CD8-positive, alpha-beta memory T cell (primary cell): ENCODE measurements at regions of chr7 and their contacts with region 1.

Region 1: DNA sequence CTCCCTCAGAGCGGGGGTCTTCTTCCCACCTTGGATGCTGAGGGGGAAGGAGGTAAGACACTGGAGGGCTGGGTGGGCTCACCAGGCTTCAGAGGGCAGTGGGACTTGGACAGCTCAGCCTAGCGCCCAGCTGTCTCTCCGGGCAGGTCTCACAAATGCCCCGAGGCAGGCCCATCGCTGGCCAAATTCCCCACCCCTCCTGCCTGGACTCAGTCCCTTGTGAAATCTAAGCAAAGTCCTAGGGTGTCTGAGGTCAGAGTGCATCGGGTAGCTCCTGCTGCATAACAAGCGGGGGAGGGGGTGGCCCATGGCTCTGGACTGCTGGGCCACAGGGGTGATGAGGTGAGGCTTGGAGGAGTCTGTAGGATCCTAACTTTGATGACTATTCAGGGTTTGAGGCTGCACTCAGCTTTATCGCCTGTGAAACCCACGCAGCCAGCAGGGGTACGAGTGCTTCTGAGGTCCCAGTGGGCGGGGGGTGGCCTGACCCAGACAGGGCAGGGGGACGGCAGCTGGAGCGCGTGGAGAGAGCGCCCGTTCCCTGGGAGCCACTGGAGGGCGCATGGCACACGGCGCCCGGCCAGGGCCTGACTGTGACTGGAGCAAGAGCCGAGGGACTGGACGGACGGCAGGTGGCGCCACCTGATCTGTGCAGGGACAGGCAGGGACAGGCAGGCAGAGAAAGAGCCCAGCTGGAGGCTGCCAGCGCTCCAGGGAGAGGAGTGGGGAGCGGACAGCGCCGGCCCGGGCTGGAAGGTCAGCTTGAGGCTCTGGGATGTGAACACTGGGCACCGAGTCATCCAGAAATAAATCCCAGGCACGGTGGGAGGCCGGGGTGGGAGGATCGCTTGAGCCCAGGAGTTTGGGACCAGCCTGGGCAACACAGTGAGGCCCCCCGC is 10.0 kb downstream of the CYP2W1 start:
- DNase-seq: peak; percentile 83 to 95 (median 89)
- H3K4me3 ChIP-seq: no peak overlapping the region
- H3K4me3 Mint-ChIP-seq: no peak overlapping the region
- H3K27ac ChIP-seq: no peak overlapping the region
- H3K27ac Mint-ChIP-seq: peak overlapping the region in 1 of 8 donors; percentile 66
- H3K4me1 ChIP-seq: peaks cover 5% of the 10 kb centered on the region
- H3K4me1 Mint-ChIP-seq: peaks cover 0 to 5% (median 3%) of the 10 kb centered on the region in 3 donors
- H3K27me3 ChIP-seq: no peaks in the 10 kb centered on the region
- H3K27me3 Mint-ChIP-seq: no peaks in the 10 kb centered on the region

Region 2: DNA sequence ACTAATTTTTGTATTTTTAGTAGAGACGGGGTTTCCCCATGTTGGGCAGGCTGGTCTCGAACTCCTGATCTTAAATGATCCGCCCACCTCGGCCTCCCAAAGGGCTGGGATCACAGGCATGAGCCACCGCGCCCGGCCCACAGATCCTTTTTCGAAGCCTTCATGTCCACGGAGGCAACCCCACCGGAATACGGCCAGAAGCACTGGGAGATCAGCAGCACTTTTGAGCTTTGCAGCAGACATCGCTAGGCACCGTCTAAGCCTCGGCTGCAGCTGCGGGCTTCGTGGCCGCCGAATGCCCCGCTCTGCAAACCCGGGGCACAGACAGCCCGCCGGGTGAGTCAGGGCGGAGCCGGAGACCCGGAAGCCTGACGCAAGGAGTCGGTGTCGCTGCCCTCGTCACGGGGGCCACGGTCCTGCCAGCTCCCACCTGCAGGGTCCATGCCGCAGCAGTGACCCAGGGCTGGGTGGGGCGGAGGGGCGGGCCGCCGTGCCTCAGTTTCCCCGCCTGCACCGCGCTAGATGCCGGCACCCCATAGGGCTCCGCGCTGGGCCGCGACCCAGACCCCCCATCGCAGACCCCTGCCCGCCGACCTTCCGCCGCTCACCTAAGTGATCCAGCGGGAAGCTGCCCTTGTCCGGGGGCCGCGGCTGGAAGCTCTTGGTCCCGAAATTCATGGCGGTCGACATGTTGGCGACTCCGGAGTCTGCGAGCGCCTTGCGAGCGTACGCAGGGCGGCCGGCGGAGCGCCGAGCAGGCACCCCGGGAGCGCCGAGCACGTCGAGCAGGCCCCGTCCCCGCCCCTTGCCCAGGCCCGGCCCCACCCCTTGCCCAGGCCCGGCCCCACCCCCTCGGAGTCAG is 17.9 kb before region 1 on chr7 and contains the start of gene COX19:
- CTCF ChIA-PET with region 1: interaction called, 43 read pairs
- POLR2A ChIA-PET with region 1: no interaction called
- DNase-seq: peak; percentile 84 to 91 (median 86)
- H3K4me3 ChIP-seq: peak within 1 kb of the TSS; percentile 79
- H3K4me3 Mint-ChIP-seq: peak within 1 kb of the TSS; percentile 90 to 97 (median 93)
- H3K27ac ChIP-seq: peak within 1 kb of the TSS; percentile 87
- H3K27ac Mint-ChIP-seq: peak within 1 kb of the TSS; percentile 90 to 98 (median 96)
- H3K4me1 ChIP-seq: peaks cover 29% of the 10 kb centered on the region
- H3K4me1 Mint-ChIP-seq: peaks cover 28 to 36% (median 35%) of the 10 kb centered on the region in 3 donors
- H3K27me3 ChIP-seq: no peaks in the 10 kb centered on the region
- H3K27me3 Mint-ChIP-seq: peaks cover 0 to 2% of the 10 kb centered on the region in 2 donors
- total RNA-seq, gene COX19: 18.9 to 21.3 TPM

Region 3: DNA sequence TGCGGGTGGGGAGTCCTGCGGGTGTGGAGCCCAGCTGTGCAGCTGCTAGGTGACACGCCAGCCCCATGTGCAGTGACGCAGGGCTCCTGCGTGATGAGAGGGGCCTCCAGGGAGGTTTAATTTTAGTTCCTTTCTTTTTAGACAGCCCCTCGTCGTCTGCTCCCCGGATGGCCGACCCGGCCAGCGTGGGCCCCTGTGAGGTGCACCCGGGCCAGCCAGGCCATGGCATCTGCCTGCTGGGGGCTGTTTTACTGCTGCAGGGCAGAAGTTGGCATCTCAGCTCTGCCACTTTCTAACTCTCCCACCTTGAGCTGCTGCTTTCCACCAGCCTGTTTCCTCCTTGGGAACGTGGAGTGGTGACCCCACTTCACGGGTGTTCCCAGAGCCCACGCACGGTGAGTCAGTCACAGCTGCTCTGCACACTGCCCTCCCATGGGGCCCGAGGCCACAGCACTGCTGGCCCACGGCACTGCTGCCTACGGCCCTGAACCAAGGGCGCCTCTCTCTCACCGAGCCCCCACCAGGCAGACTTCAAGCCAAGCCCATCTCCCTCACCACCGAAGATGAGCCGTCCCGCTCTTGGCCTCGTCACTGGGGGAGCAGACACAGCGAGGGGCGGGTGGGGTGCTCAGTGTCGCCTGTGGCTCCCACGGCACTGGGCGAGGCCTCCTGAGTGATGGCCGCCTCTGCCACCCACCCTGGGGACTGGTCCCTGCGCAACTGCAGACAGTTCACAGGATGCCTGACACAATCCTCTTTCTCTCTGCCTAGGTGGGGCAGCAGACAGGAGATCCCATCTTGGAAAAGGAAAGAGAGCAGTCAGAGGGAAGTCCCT is 11.3 kb after region 1 on chr7:
- CTCF ChIA-PET with region 1: interaction called, 12 read pairs
- POLR2A ChIA-PET with region 1: no interaction called
- DNase-seq: no peak
- H3K4me3 ChIP-seq: no peak overlapping the region
- H3K4me3 Mint-ChIP-seq: no peak overlapping the region
- H3K27ac ChIP-seq: no peak overlapping the region
- H3K27ac Mint-ChIP-seq: no peak overlapping the region
- H3K4me1 ChIP-seq: no peaks in the 10 kb centered on the region
- H3K4me1 Mint-ChIP-seq: peaks cover 0 to 4% (median 2%) of the 10 kb centered on the region in 3 donors
- H3K27me3 ChIP-seq: no peaks in the 10 kb centered on the region
- H3K27me3 Mint-ChIP-seq: no peaks in the 10 kb centered on the region

Region 4: DNA sequence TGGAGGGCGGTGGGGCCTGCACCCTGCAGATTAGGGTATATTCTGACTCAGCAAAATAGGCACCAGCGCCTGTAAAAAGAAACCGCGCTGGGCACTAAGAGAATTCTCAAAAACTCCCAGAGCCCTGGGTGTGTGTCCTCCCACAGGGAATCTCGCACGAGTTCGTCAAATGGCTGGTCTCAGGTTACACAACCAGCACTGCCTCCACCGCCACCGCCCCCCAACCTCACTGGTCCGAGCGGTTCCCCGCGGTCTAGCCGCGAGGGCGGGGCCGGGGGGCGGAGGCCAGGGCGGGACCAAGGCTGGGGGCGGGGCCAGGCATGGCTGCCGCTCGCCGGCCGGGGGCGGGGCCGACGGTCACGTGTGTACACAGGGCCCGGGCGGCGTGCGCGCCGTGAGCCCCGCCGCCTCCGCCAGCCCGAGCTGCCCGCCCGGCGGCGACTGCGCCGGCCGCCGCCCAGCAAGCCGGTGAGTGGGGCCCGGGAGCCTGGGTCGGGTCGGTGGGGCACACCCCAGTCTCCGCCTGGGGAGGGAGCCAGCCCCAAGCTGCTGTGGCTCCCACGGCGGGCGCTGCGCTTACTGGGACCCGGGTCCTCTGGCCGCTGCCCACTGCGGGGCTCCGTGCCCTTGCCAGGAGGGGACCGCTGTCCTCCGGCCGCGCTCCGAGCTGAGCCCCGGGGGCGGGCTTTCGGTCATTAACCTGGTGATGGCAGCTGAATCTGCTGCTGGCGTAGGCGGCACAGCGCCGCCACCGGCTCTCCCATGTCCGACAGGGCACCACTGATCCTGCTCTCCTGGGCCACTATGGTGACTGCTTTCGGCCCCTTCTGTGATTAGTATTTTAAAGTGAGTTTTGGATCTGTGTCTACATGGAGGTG is 51.5 kb after region 1 on chr7 and contains the start of gene GPR146:
- CTCF ChIA-PET with region 1: interaction called, 28 read pairs
- POLR2A ChIA-PET with region 1: no interaction called
- DNase-seq: peak; percentile 81 to 92 (median 89)
- H3K4me3 ChIP-seq: peak within 1 kb of the TSS; percentile 68
- H3K4me3 Mint-ChIP-seq: peak within 1 kb of the TSS; percentile 83 to 92 (median 87)
- H3K27ac ChIP-seq: peak within 1 kb of the TSS; percentile 76
- H3K27ac Mint-ChIP-seq: peak within 1 kb of the TSS; percentile 67 to 90 (median 86)
- H3K4me1 ChIP-seq: peaks cover 65% of the 10 kb centered on the region
- H3K4me1 Mint-ChIP-seq: peaks cover 57 to 72% (median 59%) of the 10 kb centered on the region in 3 donors
- H3K27me3 ChIP-seq: no peaks in the 10 kb centered on the region
- H3K27me3 Mint-ChIP-seq: no peaks in the 10 kb centered on the region
- total RNA-seq, gene GPR146: 0.55 to 0.70 TPM

Region 5: DNA sequence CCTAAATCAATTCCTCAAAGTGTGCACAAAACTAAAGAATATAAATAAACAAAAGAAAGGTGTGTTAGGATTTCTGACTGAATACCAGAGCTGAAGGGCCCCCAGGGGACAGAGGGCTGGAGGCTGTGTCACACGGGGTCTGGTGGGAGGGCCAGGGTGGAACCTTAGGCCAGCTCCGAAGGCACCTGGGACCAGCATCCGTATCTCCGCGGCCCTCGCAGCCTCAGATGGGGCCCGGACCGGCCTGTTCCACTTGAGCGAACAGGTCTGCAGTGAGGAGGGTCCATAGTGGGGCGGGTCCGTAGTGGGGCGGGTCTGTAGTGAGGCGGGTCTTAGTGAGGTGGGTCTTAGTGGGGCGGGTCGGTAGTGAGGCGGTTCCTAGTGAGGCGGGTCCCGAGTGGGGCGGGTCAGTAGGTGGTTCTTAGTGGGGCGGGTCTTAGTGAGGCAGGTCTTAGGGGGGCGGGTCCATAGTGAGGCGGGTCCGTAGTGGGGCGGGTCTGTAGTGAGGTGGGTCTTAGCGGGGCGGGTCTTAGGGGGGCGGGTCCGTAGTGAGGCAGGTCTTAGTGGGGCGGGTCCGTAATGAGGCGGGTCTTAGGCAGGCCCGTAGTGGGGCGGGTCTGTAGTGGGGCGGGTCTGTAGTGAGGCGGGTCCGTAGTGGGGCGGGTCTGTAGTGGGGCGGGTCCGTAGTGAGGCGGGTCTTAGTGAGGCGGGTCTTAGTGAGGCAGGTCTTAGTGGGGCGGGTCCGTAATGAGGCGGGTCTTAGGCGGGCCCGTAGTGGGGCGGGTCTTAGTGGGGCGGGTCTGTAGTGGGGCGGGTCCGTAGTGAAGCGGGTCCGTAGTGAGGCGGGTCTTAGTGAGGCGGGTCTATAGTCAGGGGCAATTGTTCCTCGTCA is 66.5 kb after region 1 on chr7:
- CTCF ChIA-PET with region 1: interaction called, 222 read pairs
- POLR2A ChIA-PET with region 1: no interaction called
- DNase-seq: no peak
- H3K4me3 ChIP-seq: no peak overlapping the region
- H3K4me3 Mint-ChIP-seq: peak overlapping the region in 1 of 7 donors; percentile 66
- H3K27ac ChIP-seq: no peak overlapping the region
- H3K27ac Mint-ChIP-seq: peak overlapping the region in 2 of 8 donors; percentile 54 to 73
- H3K4me1 ChIP-seq: peaks cover 9% of the 10 kb centered on the region
- H3K4me1 Mint-ChIP-seq: peaks cover 0 to 4% (median 4%) of the 10 kb centered on the region in 3 donors
- H3K27me3 ChIP-seq: no peaks in the 10 kb centered on the region
- H3K27me3 Mint-ChIP-seq: no peaks in the 10 kb centered on the region

Region 6: GRCh38 chr7:1073142-1073977 is 80.4 kb after region 1 on chr7:
- CTCF ChIA-PET with region 1: interaction called, 19 read pairs
- POLR2A ChIA-PET with region 1: interaction called, 5 read pairs
- DNase-seq: no peak
- H3K4me3 ChIP-seq: no peak overlapping the region
- H3K4me3 Mint-ChIP-seq: no peak overlapping the region
- H3K27ac ChIP-seq: no peak overlapping the region
- H3K27ac Mint-ChIP-seq: peak overlapping the region in 1 of 8 donors; percentile 58
- H3K4me1 ChIP-seq: no peaks in the 10 kb centered on the region
- H3K4me1 Mint-ChIP-seq: no peaks in the 10 kb centered on the region
- H3K27me3 ChIP-seq: no peaks in the 10 kb centered on the region
- H3K27me3 Mint-ChIP-seq: no peaks in the 10 kb centered on the region

Region 7: DNA sequence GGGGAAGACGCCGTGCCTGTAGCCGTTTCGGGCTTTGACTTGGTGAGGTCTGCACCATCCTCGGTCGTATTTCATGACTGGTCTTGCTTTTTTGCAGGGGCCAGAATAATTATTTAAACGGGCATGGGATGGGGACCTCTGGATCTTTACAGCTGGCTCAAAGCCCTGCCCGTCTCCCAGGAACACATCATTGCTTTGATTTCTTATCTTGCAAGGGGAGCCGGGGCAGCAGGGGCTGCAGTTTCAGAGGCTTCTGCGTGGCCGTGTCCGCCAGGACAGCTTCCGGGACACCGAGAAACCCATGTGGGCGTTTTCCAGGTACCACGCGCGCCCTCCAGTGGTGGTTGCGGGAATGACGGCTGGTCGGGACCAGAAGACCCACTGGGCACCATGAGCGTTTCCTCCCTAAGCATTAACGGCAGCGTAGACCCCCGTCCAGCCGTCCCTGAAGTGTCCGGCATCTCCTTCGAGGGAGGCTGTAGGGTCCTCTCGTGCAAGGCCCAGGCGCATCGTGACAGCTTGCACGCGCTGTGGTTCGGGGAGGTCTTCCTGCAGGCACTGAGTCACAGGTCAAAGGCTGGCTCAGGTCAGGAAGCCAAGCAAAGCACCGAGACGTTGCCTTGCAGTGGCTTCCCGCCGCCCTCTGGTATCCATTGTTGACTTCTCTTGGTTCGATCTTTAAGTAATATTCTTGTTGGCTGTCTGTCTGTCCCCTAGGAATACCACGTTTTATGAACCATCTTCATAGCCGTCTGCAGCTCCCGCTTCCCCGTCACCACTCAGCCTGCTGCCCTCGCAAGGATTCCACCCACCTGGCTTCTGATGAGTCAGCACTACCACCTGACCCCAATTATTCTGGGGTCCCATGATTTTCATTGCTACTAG is 183.3 kb after region 1 on chr7:
- CTCF ChIA-PET with region 1: interaction called, 14 read pairs
- POLR2A ChIA-PET with region 1: no interaction called
- DNase-seq: peak; percentile 56 to 81 (median 73)
- H3K4me3 ChIP-seq: peak overlapping the region; percentile 42
- H3K4me3 Mint-ChIP-seq: peak overlapping the region in 6 of 7 donors; percentile 53 to 81 (median 69)
- H3K27ac ChIP-seq: no peak overlapping the region
- H3K27ac Mint-ChIP-seq: peak overlapping the region in 2 of 8 donors; percentile 12 to 78
- H3K4me1 ChIP-seq: peaks cover 15% of the 10 kb centered on the region
- H3K4me1 Mint-ChIP-seq: peaks cover 8 to 13% (median 11%) of the 10 kb centered on the region in 3 donors
- H3K27me3 ChIP-seq: peaks cover 4% of the 10 kb centered on the region
- H3K27me3 Mint-ChIP-seq: peaks cover 15 to 23% of the 10 kb centered on the region in 2 donors